Natural killer cell (primary cell): ENCODE measurements at regions of chr2 and their contacts with region 1.

Region 1: DNA sequence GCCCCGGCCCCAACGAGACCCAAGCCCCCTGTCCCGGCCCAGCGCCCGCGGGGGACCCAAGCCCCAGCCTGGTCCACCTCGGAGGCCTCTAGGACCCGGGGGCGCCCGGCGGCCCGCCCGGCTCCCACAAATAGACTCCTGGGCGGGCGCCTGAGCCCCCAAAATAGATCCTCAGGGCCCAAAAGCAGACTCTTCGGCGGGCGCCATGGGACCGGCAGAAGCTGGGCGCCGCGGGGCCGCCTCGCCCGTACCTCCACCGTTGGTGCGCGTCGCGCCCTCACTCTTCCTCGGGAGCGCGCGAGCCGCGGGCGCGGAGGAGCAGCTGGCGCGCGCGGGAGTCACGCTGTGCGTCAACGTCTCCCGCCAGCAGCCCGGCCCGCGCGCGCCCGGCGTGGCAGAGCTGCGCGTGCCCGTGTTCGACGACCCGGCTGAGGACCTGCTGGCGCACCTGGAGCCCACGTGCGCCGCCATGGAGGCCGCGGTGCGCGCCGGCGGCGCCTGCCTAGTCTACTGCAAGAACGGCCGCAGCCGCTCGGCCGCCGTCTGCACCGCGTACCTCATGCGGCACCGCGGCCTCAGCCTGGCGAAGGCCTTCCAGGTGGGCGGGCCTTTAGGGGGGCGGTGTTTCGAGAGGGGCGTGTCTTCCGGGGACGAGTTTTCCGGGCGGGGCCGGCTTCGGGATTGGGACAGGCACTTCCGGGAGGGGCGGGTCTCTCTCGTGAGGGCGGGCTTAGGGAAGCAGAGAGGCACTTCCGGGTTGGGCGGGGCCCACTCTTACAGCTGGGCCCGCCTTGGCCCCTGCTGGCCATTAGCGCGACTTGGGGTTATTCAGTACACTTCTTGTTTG is 546 bp downstream of the DUSP28 start:
- DNase-seq: peak; percentile 98 to 99
- ATAC-seq: peak; percentile 64 to 85 (median 67)
- H3K4me3 ChIP-seq: peak overlapping the region; percentile 62
- H3K4me3 Mint-ChIP-seq: peak overlapping the region; percentile 93
- H3K27ac ChIP-seq: peak overlapping the region; percentile 96
- H3K27ac Mint-ChIP-seq: peak overlapping the region; percentile 99
- H3K4me1 ChIP-seq: peaks cover 78% of the 10 kb centered on the region
- H3K4me1 Mint-ChIP-seq: peaks cover 60 to 76% of the 10 kb centered on the region in 2 donors
- H3K27me3 ChIP-seq: no peaks in the 10 kb centered on the region
- H3K27me3 Mint-ChIP-seq: no peaks in the 10 kb centered on the region
- CTCF ChIP-seq: peak; percentile 39

Region 2: DNA sequence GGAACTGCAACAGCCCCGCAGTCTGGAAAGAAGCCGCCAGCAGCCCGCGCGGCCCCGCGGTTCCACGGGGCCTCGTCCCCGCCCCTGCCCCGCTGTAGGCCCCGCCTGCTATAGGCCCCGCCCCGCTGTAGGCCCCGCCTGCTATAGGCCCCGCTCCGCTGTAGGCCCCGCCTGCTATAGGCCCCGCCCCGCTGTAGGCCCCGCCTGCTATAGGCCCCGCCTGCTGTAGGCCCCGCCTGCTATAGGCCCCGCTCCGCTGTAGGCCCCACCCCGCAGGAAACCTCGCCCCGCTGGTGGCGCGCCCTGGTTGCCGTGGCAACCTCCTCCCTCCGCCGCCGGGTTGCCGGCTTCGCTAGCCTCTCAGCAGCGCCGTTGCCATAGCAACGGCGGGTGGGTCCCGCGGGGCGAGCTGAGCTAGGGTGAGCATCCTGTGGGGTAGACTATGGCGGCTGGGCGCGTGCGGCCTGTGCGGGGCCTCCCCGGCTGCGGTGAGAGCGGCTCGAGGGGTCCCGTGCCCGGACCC is 271.6 kb after region 1 on chr2:
- intact Hi-C with region 1: loop called (anchors 1 kb)
- DNase-seq: peak; percentile 95 to 99
- ATAC-seq: peak; percentile 92 to 96 (median 93)
- H3K4me3 ChIP-seq: peak overlapping the region; percentile 3
- H3K4me3 Mint-ChIP-seq: peak overlapping the region; percentile 49
- H3K27ac ChIP-seq: peak overlapping the region; percentile 25
- H3K27ac Mint-ChIP-seq: peak overlapping the region; percentile 76 to 90
- H3K4me1 ChIP-seq: peaks cover 14% of the 10 kb centered on the region
- H3K4me1 Mint-ChIP-seq: peaks cover 5 to 11% of the 10 kb centered on the region in 2 donors
- H3K27me3 ChIP-seq: peaks cover 19% of the 10 kb centered on the region
- H3K27me3 Mint-ChIP-seq: peaks cover 11 to 24% of the 10 kb centered on the region in 2 donors
- CTCF ChIP-seq: no peak